Heart right ventricle (tissue), 16 donors: ENCODE measurements at regions of chr15 and their contacts with region 1.

Region 1: GRCh38 chr15:25863111-25863967 is at the start of gene ATP10A:
- DNase-seq: peak; percentile 44 to 45
- ATAC-seq: peak; percentile 21 to 68 (median 43)
- H3K4me3 ChIP-seq: peak within 1 kb of the TSS; percentile 21 to 68 (median 62)
- H3K27ac ChIP-seq: peak within 1 kb of the TSS in 8 of 10 donors; percentile 29 to 73 (median 52)
- H3K4me1 ChIP-seq: peaks cover 0 to 44% (median 21%) of the 10 kb centered on the region in 9 donors
- H3K27me3 ChIP-seq: peaks cover 0 to 56% (median 34%) of the 10 kb centered on the region in 7 donors
- CTCF ChIP-seq: no peak
- total RNA-seq, gene ATP10A: 0.45 to 1.9 (median 0.86) TPM

Region 2: GRCh38 chr15:25783607-25784540 is 79.5 kb before region 1 on chr15:
- intact Hi-C with region 1: loop called in 3 of 10 experiments (anchors 5 to 10 kb)
- DNase-seq: no peak
- ATAC-seq: peak in 1 of 8 donors; percentile 23
- H3K4me3 ChIP-seq: no peak overlapping the region
- H3K27ac ChIP-seq: peak overlapping the region in 1 of 10 donors; percentile 37
- H3K4me1 ChIP-seq: peaks cover 0 to 45% (median 11%) of the 10 kb centered on the region in 9 donors
- H3K27me3 ChIP-seq: no peaks in the 10 kb centered on the region
- CTCF ChIP-seq: peak in 3 of 9 donors; percentile 29 to 39 (median 31)

Region 3: DNA sequence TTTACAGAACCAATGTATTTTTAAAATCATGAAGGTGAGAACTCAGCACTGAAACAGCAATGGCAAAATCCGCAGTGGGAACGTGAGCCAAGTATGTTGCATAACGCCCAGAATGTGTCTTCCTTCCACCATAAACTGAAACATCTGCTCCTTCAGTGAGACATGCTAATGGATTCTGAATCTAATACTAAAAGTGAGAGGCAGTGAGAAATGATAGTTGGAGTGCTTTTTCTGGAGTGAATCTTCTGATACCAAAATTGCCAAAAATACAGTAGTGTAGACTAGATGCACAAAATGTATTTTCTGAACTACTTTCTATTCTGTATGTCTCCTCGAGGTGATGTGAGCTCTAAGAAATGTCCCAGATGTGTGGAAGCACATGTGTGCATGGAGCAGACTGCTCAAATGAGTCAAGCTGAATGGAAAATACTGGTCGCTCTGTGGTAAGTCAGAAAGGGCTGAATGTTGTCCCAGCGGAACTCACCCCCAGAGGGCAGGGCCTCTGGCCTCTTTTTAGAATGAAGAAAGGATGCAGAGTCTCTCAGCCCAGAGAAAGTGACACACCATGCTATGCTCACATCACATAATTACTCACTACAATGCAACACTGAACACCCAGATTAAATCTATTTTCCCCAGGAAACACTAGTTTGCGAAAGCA is 73.2 kb before region 1 on chr15:
- intact Hi-C with region 1: loop called in 2 of 10 experiments (anchors 5 to 10 kb)
- DNase-seq: peak; percentile 49 to 54
- ATAC-seq: peak; percentile 75 to 85 (median 78)
- H3K4me3 ChIP-seq: no peak overlapping the region
- H3K27ac ChIP-seq: peak overlapping the region; percentile 23 to 88 (median 70)
- H3K4me1 ChIP-seq: peaks cover 0 to 65% (median 25%) of the 10 kb centered on the region in 9 donors
- H3K27me3 ChIP-seq: no peaks in the 10 kb centered on the region
- CTCF ChIP-seq: peak in 1 of 9 donors; percentile 4

Region 4: DNA sequence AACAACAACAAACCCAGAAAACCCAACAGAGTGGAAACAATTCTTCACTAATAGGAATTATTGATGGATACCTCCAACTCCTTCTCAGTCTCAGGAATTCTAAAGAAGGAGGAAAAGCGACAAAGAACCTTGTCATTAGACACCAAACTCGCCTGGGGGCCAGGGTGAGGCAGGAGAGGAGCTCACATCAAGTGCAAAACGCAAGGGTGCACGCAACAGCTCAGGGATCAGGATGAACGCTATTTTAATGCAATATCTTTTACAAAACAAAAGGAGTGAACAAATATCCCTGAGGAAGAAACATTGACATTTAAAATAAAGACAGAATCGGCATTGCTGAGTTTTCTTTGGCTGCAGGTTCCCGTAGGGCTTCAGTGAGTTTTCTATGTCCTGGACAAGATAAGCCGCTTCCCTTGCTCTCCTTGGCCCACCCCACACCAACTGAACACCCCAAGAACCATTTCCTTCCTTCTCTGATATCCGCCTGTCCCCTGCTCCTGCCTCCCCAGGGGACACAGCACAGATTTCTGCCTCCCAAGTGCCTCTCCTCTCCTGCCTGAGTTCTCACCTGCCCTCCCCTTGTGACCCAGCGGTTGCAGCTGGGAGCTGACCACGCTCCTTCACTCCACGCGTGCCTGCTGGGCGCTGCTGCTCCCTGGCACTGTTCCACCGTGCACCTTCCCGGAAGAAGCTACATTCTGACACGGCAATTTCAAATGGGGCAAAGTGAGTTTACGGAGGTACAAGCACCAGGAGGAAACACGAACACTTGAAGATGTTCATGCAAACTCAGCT is 63.2 kb before region 1 on chr15:
- intact Hi-C with region 1: loop called in 1 of 10 experiments (anchors 5 kb)
- DNase-seq: no peak
- ATAC-seq: no peak
- H3K4me3 ChIP-seq: no peak overlapping the region
- H3K27ac ChIP-seq: no peak overlapping the region
- H3K4me1 ChIP-seq: peaks cover 0 to 22% (median 9%) of the 10 kb centered on the region in 9 donors
- H3K27me3 ChIP-seq: peaks cover 0 to 4% (median 0%) of the 10 kb centered on the region in 7 donors
- CTCF ChIP-seq: no peak

Region 5: DNA sequence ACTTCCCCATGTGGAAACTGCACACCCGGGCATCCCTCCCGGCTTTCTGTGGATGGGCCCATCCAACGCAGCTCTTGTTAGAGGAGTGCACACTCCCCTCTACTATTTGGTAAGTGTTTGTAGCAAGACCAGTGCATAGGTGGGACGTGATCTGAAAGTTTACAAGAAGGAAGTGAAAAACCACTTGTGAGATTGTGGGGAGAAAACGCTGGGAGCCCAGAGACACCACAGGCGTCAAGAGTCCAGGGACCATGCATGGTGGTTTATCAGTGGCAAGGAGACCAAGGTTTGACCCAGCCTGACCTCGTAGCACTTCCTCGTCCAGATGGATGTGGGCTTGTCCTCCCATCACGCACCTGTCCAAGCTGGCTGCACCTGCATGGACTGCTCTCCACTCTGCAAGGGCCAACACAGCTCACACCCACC is 51.8 kb before region 1 on chr15:
- intact Hi-C with region 1: no loop called
- DNase-seq: no peak
- ATAC-seq: peak in 1 of 8 donors; percentile 19
- H3K4me3 ChIP-seq: no peak overlapping the region
- H3K27ac ChIP-seq: no peak overlapping the region
- H3K4me1 ChIP-seq: peaks cover 0 to 14% (median 0%) of the 10 kb centered on the region in 9 donors
- H3K27me3 ChIP-seq: peaks cover 0 to 15% (median 0%) of the 10 kb centered on the region in 7 donors
- CTCF ChIP-seq: no peak